Activated CD8-positive, alpha-beta T cell treated with anti-CD3 and anti-CD28 coated beads for 36 hours (primary cell): ENCODE measurements at regions of chr20 and their contacts with region 1.

Region 1: DNA sequence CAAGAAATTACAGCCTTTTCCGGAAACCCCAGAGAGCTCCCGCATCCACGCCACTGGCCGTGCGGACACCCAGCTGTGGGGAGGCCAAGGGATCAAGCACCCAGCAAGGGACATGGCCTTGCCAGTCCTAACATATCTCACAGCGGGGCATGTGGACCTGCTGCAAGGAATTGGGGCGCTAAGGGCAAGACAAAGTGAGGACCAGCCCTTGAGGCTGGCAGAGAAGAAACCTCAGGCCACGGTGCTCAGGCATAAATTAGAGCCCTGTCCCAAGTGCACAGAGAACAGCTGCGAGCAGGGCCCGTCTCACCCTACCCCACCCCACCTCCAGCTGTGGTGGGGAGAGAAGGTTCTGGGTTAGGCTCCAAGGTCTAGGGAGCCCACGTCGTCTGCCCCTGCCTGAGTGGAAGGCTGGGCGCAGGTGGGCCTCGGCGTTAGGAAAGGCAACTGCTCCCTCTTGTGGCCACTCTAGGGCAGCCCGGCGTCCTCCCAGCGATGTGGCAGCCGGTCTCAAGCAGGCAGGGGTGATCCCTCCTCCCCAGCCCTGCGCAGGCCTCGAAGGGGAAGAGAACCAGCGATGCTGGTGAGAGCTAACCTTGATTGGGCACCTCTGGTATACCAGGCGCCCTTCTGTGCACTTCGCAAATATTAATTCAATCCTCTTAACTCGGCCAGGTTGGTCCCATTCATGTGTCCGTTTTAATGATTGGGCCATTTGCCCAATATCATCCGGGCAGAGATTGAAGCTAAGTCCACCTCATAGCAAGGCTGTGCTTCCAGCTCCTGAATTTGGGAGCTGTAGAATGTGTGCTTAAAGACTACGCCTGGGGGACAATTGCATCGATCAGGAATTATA is 235.8 kb downstream of the NFATC2 start:
- DNase-seq: peak; percentile 82
- ATAC-seq: peak; percentile 99
- H3K4me3 Mint-ChIP-seq: no peak overlapping the region
- H3K27ac Mint-ChIP-seq: no peak overlapping the region
- H3K4me1 Mint-ChIP-seq: peaks cover 3% of the 10 kb centered on the region
- H3K27me3 Mint-ChIP-seq: peaks cover 11% of the 10 kb centered on the region
- CTCF ChIP-seq: peak; percentile 92

Region 2: GRCh38 chr20:50980851-50981713 is 325.6 kb before region 1 on chr20:
- CTCF ChIA-PET with region 1: interaction called, 210 read pairs
- POLR2A ChIA-PET with region 1: interaction called, 5 read pairs
- intact Hi-C with region 1: loop called (anchors 2 kb)
- DNase-seq: peak; percentile 80
- ATAC-seq: peak; percentile 43
- H3K4me3 Mint-ChIP-seq: no peak overlapping the region
- H3K27ac Mint-ChIP-seq: peak overlapping the region; percentile 83
- H3K4me1 Mint-ChIP-seq: peaks cover 18% of the 10 kb centered on the region
- H3K27me3 Mint-ChIP-seq: peaks cover 32% of the 10 kb centered on the region
- CTCF ChIP-seq: peak; percentile 92

Region 3: DNA sequence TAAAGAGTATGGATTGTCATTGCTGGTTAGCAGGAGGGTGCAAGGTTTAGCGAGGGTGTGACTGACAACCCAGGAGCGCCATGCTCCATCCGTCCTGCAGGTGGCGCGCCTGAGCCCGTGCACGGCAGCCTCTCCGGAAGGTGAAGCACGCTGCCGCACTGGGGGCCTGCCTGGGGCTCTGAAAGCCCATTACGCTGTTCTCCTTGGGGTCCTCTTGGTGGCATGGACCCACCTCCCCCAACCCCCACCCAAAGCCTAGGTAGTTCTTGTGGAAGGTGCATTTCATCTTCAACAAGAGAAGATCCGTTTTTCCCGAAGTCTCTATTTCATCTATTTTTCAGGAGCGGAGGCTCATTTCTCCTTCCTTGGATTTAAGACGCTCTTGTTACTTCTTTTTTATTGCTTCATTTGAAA is 86.4 kb before region 1 on chr20:
- CTCF ChIA-PET with region 1: interaction called, 16 read pairs
- POLR2A ChIA-PET with region 1: no interaction called
- intact Hi-C with region 1: loop called (anchors 5 kb)
- DNase-seq: peak; percentile 70
- ATAC-seq: peak; percentile 90
- H3K4me3 Mint-ChIP-seq: no peak overlapping the region
- H3K27ac Mint-ChIP-seq: no peak overlapping the region
- H3K4me1 Mint-ChIP-seq: peaks cover 6% of the 10 kb centered on the region
- H3K27me3 Mint-ChIP-seq: peaks cover 37% of the 10 kb centered on the region
- CTCF ChIP-seq: peak; percentile 95

Region 4: GRCh38 chr20:51258582-51259180 is 48.0 kb before region 1 on chr20:
- CTCF ChIA-PET with region 1: no interaction called
- POLR2A ChIA-PET with region 1: no interaction called
- intact Hi-C with region 1: no loop called
- DNase-seq: no peak
- ATAC-seq: no peak
- H3K4me3 Mint-ChIP-seq: no peak overlapping the region
- H3K27ac Mint-ChIP-seq: no peak overlapping the region
- H3K4me1 Mint-ChIP-seq: no peaks in the 10 kb centered on the region
- H3K27me3 Mint-ChIP-seq: peaks cover 13% of the 10 kb centered on the region
- CTCF ChIP-seq: no peak

Region 5: GRCh38 chr20:51318058-51318895 is 11.5 kb after region 1 on chr20:
- CTCF ChIA-PET with region 1: interaction called, 44 read pairs
- POLR2A ChIA-PET with region 1: interaction called, 4 read pairs
- intact Hi-C with region 1: no loop called
- DNase-seq: peak; percentile 76
- ATAC-seq: peak; percentile 78
- H3K4me3 Mint-ChIP-seq: peak overlapping the region; percentile 31
- H3K27ac Mint-ChIP-seq: peak overlapping the region; percentile 57
- H3K4me1 Mint-ChIP-seq: peaks cover 4% of the 10 kb centered on the region
- H3K27me3 Mint-ChIP-seq: no peaks in the 10 kb centered on the region
- CTCF ChIP-seq: peak; percentile 55

Region 6: GRCh38 chr20:51624157-51624731 is 317.5 kb after region 1 on chr20:
- CTCF ChIA-PET with region 1: interaction called, 15 read pairs
- POLR2A ChIA-PET with region 1: no interaction called
- intact Hi-C with region 1: no loop called
- DNase-seq: peak; percentile 80
- ATAC-seq: peak; percentile 86
- H3K4me3 Mint-ChIP-seq: no peak overlapping the region
- H3K27ac Mint-ChIP-seq: peak overlapping the region; percentile 46
- H3K4me1 Mint-ChIP-seq: peaks cover 10% of the 10 kb centered on the region
- H3K27me3 Mint-ChIP-seq: no peaks in the 10 kb centered on the region
- CTCF ChIP-seq: peak; percentile 87